Naive thymus-derived CD4-positive, alpha-beta T cell (primary cell): ENCODE measurements at regions of chr12 and their contacts with region 1.

Region 1: GRCh38 chr12:53928054-53928835 is 10.4 kb upstream of the HOXC13 start:
- DNase-seq: no peak
- ATAC-seq: no peak
- H3K4me3 ChIP-seq: no peak overlapping the region
- H3K4me3 Mint-ChIP-seq: peak overlapping the region in 3 of 10 donors; percentile 6 to 18 (median 16)
- H3K27ac ChIP-seq: no peak overlapping the region
- H3K27ac Mint-ChIP-seq: peak overlapping the region in 1 of 9 donors; percentile 46
- H3K4me1 ChIP-seq: no peaks in the 10 kb centered on the region
- H3K4me1 Mint-ChIP-seq: peaks cover 0 to 7% (median 3%) of the 10 kb centered on the region in 7 donors
- H3K27me3 ChIP-seq: peaks cover 19 to 31% of the 10 kb centered on the region in 2 donors
- H3K27me3 Mint-ChIP-seq: peaks cover 91 to 99% (median 93%) of the 10 kb centered on the region in 5 donors

Region 2: GRCh38 chr12:53961025-53961761 is 32.9 kb after region 1 on chr12:
- CTCF ChIA-PET with region 1: no interaction called
- POLR2A ChIA-PET with region 1: no interaction called
- intact Hi-C with region 1: loop called in 1 of 2 experiments (anchors 5 kb)
- DNase-seq: no peak
- ATAC-seq: no peak
- H3K4me3 ChIP-seq: no peak overlapping the region
- H3K4me3 Mint-ChIP-seq: no peak overlapping the region
- H3K27ac ChIP-seq: no peak overlapping the region
- H3K27ac Mint-ChIP-seq: no peak overlapping the region
- H3K4me1 ChIP-seq: peaks cover 14 to 16% of the 10 kb centered on the region in 2 donors
- H3K4me1 Mint-ChIP-seq: peaks cover 10 to 51% (median 34%) of the 10 kb centered on the region in 7 donors
- H3K27me3 ChIP-seq: peaks cover 32 to 73% of the 10 kb centered on the region in 2 donors
- H3K27me3 Mint-ChIP-seq: peaks cover 89 to 93% (median 90%) of the 10 kb centered on the region in 5 donors